Endothelial cell of umbilical vein (primary cell): ENCODE measurements at regions of chr2 and their contacts with region 1.

Region 1: DNA sequence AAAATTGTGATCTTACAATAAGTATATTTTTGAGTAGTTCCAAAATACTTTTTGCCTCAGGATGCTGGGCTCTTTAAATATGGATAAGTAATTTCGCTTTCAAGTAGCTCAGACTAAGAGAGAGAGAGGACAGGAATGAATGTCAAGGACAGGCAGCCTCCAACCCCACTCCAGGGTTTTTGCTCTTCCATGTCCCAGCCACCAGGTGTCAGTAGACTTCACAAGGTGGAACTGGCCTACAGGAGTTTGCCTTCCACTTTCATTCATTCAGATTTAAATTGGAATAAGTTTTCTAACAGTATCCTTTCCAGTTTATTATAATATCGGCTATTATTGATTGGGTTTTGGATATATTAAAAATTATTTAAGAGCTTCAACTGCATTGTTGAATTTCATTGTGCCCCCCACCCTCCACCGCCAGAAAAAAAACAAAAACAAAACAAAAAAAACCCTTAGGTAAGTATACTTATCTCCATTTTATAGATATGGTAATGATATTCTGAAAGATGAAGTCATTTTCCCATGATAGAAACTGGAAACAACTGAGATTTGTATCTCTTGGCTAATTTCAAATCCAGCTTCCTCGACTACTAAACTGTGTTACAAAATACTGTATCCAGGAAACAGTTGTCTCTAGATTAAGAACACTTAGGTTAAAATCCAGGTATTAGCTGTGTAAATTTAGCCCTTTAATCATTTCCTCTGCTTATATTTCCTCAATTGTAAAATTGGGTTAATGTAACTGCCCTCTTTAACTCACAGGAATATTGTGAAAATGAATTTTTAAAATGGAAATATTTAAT is 793.1 kb downstream of the ERBB4 start:
- DNase-seq: peak; percentile 56
- H3K4me3 ChIP-seq: no peak overlapping the region
- H3K27ac ChIP-seq: no peak overlapping the region
- H3K4me1 ChIP-seq: peaks cover 3% of the 10 kb centered on the region
- H3K27me3 ChIP-seq: no peaks in the 10 kb centered on the region
- CTCF ChIP-seq: peak; percentile 80 to 82
- POLR2A ChIP-seq: no peak

Region 2: DNA sequence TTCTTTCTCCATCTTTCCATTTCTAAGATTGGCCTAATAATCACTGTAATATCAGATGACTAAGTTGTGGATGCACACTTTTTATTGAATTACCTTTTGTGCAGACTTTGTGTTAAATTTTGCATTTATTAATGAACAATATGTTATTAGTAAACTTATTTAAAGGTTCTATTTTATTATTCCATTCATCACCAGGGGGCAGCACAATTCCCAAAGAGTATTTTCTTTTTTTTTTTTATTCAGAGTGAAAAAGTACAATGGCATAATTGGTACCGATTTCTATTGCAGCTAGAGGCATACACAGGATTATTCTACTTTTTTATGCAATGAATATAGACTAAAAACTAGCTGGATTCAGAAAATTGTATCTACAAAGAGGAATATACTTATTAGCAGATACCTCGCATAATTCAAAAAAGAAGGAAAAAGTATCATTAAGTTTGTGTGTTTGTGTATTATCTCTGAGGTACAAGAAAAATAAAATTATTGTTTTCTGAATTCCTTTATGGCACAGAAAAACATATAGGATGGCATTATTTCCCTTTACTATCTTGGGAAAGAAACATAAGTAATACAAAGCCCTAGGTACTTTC is 402.5 kb after region 1 on chr2:
- CTCF ChIA-PET with region 1: interaction called, 5 read pairs
- POLR2A ChIA-PET with region 1: no interaction called
- dilution Hi-C with region 1: no loop called
- intact Hi-C with region 1: loop called (anchors 1 kb)
- DNase-seq: peak; percentile 39
- H3K4me3 ChIP-seq: no peak overlapping the region
- H3K27ac ChIP-seq: no peak overlapping the region
- H3K4me1 ChIP-seq: no peaks in the 10 kb centered on the region
- H3K27me3 ChIP-seq: no peaks in the 10 kb centered on the region
- CTCF ChIP-seq: peak; percentile 19 to 21
- POLR2A ChIP-seq: no peak

Region 3: DNA sequence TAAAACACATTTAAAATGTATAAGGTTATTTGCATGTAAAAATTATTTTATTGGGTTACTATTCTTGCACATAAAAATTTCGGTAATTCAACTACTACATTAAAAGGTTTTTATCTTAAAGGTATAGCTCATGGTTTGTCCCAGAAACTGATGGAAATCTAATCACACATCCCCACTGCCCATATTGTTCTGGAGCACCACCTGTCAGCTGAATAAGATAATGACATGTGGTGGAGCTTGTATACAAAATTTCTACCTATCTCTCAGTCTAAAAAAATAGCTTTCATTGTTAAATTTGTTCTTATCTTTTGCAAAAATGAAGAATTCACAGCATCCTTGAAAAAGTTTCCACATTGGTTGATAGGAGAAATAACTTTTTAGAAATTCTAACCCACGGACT is 774.8 kb after region 1 on chr2:
- CTCF ChIA-PET with region 1: interaction called, 60 read pairs
- POLR2A ChIA-PET with region 1: no interaction called
- dilution Hi-C with region 1: no loop called
- intact Hi-C with region 1: no loop called
- DNase-seq: peak; percentile 13
- H3K4me3 ChIP-seq: no peak overlapping the region
- H3K27ac ChIP-seq: no peak overlapping the region
- H3K4me1 ChIP-seq: no peaks in the 10 kb centered on the region
- H3K27me3 ChIP-seq: no peaks in the 10 kb centered on the region
- CTCF ChIP-seq: no peak
- POLR2A ChIP-seq: no peak

Region 4: DNA sequence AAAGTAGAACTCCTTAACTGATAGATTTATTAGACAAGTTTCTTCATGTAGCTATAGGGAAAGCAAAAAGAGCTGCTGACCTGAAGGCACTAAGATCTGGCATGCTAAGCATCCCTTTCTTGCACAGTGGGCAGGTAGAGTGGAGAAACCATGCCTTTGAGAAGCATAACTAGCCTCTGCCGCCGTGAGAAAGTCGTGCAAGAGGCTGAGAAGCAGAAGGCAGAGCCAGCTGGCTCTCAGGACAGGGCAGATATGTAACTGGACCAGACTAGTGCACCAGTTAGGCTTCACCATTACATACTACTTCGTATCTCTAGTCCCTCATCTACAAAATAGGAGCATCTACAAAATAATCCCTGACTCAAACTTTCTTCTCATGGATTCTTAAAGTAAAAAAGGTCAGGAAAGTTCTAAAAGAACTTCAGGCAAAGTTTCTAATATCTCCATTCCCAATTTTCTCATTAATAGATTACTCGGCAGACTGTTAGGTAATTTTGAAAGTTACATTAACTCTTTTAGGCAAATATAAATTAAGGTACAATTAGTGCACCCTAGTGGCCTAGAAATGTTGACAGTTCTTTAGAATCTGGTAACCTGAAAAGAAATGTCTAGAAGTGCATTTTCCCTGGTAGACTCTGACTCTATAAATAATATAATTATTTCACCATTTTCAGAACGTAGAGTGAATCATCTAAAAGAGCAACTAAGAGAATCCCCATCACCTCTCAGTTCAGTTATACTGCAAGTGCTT is 782.8 kb after region 1 on chr2:
- CTCF ChIA-PET with region 1: interaction called, 13 read pairs
- POLR2A ChIA-PET with region 1: no interaction called
- dilution Hi-C with region 1: no loop called
- intact Hi-C with region 1: no loop called
- DNase-seq: no peak
- H3K4me3 ChIP-seq: no peak overlapping the region
- H3K27ac ChIP-seq: no peak overlapping the region
- H3K4me1 ChIP-seq: peaks cover 5% of the 10 kb centered on the region
- H3K27me3 ChIP-seq: no peaks in the 10 kb centered on the region
- CTCF ChIP-seq: peak in 1 of 2 donors; percentile 1
- POLR2A ChIP-seq: no peak

Region 5: DNA sequence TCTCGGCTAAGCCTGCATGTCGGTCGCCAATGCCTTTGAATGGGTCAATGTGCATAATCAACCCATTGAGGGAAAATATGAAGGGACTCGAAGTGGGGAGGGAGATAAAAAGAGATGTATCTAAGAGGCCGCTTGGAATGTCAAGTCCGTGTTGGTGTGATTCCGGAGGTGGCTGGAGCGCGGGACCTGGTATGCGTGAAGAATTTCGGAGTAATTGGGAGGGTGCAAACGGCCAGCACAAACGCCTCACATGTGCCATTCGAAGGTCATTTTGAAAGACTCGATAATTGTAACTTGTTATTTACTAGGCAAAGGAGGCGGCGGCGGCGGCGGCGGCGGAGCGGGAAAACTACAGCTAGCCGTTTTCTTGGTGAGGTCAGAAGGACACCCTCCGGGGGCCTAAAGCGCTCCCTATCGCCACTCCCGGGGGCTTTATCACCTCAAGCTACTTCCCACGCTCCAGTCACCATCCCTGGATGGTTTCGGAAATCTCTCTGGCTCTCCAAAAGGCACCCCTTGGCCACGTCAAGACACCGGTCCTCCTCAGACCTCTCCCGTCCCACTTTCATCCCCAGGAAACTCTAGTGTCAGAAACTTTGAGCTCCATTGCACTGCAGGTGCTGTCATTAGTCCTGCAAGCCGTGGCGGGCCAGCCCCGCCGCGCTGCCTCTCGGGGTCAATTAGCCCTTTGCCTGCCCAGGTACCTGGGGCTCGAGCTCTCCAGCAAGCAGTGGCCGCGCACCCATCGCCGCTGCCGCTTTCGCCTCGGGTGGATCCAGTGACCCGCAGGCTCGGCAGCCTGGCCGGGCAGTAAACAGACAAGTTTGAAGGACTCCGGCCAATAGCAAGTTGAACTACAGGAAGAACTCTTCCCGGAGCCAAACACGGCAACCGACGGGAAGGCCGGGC is 791.6 kb after region 1 on chr2:
- CTCF ChIA-PET with region 1: interaction called, 19 read pairs
- POLR2A ChIA-PET with region 1: no interaction called
- dilution Hi-C with region 1: no loop called
- intact Hi-C with region 1: no loop called
- DNase-seq: peak; percentile 20
- H3K4me3 ChIP-seq: peak overlapping the region; percentile 39 to 88 (median 86)
- H3K27ac ChIP-seq: no peak overlapping the region
- H3K4me1 ChIP-seq: peaks cover 18% of the 10 kb centered on the region
- H3K27me3 ChIP-seq: peaks cover 14 to 31% of the 10 kb centered on the region in 2 experiments
- CTCF ChIP-seq: no peak
- POLR2A ChIP-seq: no peak

Region 6: GRCh38 chr2:212548450-212548819 is 802.9 kb after region 1 on chr2:
- CTCF ChIA-PET with region 1: interaction called, 57 read pairs
- POLR2A ChIA-PET with region 1: no interaction called
- dilution Hi-C with region 1: no loop called
- intact Hi-C with region 1: loop called (anchors 1 kb)
- DNase-seq: peak; percentile 54
- H3K4me3 ChIP-seq: no peak overlapping the region
- H3K27ac ChIP-seq: no peak overlapping the region
- H3K4me1 ChIP-seq: no peaks in the 10 kb centered on the region
- H3K27me3 ChIP-seq: no peaks in the 10 kb centered on the region
- CTCF ChIP-seq: peak; percentile 12 to 13
- POLR2A ChIP-seq: no peak